ENCODE measurements at regions of chr9 and their contacts with region 1.

Region 1: DNA sequence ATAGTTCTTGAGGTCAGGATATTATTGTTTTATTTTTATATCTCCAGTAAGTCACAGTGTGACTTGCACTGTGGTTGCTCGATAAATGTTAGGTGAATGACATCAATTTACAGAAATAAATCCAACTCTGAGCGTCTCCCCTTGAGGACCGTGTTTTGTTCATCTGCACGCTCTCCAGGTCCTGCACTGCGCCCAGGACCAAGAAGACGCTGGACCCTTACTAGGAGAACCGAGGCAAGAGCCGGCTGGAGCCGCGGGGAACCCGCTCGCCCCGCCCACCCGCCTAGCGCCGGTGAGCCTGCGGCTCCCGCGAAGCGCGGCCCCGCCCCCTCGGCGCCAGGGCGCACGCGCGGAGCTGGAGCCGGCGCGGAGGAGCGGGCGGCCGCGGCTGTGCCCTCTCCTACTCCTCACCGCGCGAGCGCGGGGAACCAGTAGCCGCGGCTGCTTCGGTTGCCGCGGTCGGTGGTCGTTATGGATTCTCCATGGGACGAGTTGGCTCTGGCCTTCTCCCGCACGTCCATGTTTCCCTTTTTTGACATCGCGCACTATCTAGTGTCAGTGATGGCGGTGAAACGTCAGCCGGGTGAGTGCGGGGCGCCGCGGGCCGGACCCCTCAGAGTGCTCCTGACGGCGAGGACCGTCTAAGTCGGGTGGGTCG is at the start of gene TMEM38B:
- DNase-seq: peak; percentile 88
- ATAC-seq: peak; percentile 85
- H3K4me3 Mint-ChIP-seq: peak within 1 kb of the TSS; percentile 76
- H3K27ac Mint-ChIP-seq: peak within 1 kb of the TSS; percentile 86
- H3K4me1 Mint-ChIP-seq: peaks cover 27% of the 10 kb centered on the region
- H3K27me3 Mint-ChIP-seq: peaks cover 15% of the 10 kb centered on the region
- total RNA-seq, gene TMEM38B: 14.5 to 24.8 TPM

Region 2: DNA sequence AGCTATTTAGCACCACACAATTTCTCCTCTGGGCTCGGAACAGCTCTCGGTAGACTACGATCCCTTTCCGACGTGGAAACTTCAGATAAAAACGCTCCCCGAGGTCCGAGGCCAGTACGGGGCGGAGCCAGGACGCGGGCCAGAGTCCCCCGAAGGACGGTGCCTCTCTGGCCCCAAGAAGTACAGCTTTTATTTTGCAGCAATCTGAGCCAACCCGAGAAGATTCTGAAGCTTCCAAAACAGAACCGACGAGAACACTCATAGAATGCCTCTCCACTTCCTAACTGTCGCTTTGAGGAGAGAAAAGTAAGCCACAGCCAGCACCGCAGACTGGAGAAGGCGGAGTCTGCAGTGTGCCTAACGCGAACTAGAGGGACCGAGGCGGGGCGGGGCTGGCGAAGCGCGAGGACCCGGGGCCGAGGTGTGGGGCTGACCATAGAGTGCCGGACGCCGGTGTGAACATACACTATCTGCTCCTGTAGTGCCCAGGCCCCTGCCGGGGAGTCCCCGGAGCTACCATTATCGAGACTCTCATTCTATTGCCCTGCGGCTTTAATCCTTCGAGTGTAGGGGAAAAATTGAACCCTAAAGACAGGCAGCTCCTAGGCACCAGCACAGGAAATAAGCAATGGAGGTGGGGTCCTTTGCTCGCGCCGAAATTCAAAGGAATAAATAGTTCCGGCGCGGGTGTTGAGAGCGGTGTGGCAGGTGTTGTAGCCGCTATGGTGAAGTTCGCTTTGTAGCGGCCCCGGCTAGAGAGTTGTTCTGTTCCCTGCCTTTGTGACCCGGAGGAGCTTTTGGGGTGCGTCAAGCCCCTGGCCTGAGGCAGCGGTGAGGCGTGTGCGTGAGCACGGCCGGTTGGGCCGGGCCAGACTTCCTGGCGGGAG is 1600.4 kb before region 1 on chr9 and contains the start of gene SMC2:
- CTCF ChIA-PET with region 1: no interaction called
- POLR2A ChIA-PET with region 1: no interaction called
- intact Hi-C with region 1: loop called in 1 of 2 experiments (anchors 2 kb)
- DNase-seq: peak; percentile 96
- ATAC-seq: peak; percentile 91
- H3K4me3 Mint-ChIP-seq: peak within 1 kb of the TSS; percentile 88
- H3K27ac Mint-ChIP-seq: peak within 1 kb of the TSS; percentile 99
- H3K4me1 Mint-ChIP-seq: peaks cover 37% of the 10 kb centered on the region
- H3K27me3 Mint-ChIP-seq: no peaks in the 10 kb centered on the region
- total RNA-seq, gene SMC2: 78.4 to 84.5 TPM

Region 3: DNA sequence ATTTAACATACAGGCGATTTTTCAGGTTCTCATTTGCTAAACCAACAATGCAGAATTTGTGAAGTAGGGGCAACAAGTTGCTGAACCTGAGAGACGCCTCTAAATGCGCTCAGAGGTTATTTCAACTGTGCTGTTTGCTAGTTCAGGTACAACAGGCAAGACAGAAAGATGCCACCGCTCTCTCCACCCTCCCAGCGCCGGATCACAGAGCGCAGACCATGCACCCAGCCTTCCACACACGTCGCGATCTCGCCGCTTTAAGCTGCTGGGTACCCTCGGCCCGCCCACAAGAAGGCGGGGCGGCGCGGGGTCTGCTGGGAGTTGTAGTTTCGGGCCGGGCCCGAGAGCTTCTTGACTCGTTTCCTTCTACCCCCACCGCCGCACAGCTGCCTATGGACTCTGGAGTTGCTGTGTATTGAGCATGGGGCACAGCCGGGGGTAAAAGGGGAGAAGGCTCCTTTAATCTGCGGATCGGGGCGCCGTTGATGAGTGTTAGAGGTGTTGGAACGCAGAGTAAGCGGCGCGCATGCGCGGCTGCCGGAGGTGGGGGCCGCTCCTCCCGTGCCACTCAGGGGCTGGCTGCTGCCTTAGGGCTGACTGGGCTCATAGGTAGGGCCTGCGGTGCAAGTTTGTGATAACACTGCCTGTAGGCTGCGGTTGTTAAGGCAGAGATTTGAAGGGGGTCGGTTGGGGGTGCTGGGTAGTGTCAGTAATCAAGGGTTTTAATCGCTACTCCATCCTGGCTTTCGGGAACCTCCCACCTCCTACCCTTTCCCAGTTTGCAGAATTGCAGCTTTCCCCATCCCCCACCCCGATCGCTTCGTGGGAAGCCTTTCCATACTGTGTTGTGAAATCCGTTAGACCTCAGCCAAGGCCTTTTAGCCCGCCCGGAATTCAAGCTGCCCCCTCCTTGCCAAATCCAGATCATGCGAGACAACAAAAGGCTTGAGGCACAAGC is 726.0 kb before region 1 on chr9:
- CTCF ChIA-PET with region 1: no interaction called
- POLR2A ChIA-PET with region 1: no interaction called
- intact Hi-C with region 1: loop called in 1 of 2 experiments (anchors 10 kb)
- DNase-seq: peak; percentile 94
- ATAC-seq: peak; percentile 99
- H3K4me3 Mint-ChIP-seq: peak overlapping the region; percentile 86
- H3K27ac Mint-ChIP-seq: peak overlapping the region; percentile 92
- H3K4me1 Mint-ChIP-seq: peaks cover 13% of the 10 kb centered on the region
- H3K27me3 Mint-ChIP-seq: peaks cover 9% of the 10 kb centered on the region

Region 4: DNA sequence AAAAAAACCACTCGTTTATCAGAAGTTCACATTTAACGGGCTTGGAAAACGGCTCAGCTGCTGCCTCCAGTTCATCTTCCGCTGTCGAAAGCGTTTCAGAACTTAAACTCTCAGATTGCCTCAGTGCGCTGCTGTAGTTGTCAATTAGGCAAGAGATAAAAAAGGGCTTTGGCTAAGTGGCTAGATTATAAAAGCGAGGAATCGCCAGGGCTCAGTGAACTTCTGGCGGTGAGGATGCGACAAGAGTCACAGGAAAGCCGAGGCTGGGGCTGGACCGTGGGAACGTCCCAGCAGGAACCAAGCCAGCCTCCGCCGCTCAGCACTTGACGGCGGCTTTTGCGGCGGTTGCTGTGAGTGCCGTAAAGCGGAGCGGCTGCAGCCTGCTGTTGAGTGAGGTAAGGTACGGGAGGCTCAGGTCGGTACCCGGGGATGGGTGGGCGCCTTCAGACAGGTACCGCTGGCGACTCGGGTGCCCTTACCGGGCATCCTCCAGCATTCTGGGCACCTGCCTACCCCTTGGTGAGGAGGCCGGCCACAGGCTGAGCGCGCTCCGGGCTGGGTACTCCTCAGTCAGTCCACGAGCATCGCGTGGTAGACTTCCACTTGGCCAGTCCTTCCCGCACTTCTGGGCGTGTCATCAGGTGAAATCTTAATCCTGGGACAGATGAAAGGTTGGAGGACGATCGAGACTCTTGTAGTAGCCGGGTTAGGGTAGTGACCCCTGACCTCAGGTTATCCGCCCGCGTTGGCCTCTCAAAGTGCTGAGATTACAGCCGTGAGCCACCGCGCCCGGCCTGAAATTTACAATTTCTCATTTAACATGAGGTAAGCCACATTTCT is 136.3 kb before region 1 on chr9 and contains the start of gene FKTN:
- CTCF ChIA-PET with region 1: no interaction called
- POLR2A ChIA-PET with region 1: no interaction called
- intact Hi-C with region 1: loop called in 1 of 2 experiments (anchors 1 kb)
- DNase-seq: peak; percentile 91
- ATAC-seq: peak; percentile 97
- H3K4me3 Mint-ChIP-seq: peak within 1 kb of the TSS; percentile 94
- H3K27ac Mint-ChIP-seq: peak within 1 kb of the TSS; percentile 85
- H3K4me1 Mint-ChIP-seq: peaks cover 18% of the 10 kb centered on the region
- H3K27me3 Mint-ChIP-seq: no peaks in the 10 kb centered on the region
- total RNA-seq, gene FKTN: 12.1 to 16.0 TPM

Region 5: GRCh38 chr9:105712773-105713172 is 18.5 kb after region 1 on chr9:
- CTCF ChIA-PET with region 1: interaction called, 11 read pairs
- POLR2A ChIA-PET with region 1: no interaction called
- intact Hi-C with region 1: no loop called
- DNase-seq: no peak
- ATAC-seq: no peak
- H3K4me3 Mint-ChIP-seq: no peak overlapping the region
- H3K27ac Mint-ChIP-seq: no peak overlapping the region
- H3K4me1 Mint-ChIP-seq: peaks cover 8% of the 10 kb centered on the region
- H3K27me3 Mint-ChIP-seq: no peaks in the 10 kb centered on the region

Region 6: GRCh38 chr9:106075960-106076327 is 381.6 kb after region 1 on chr9:
- CTCF ChIA-PET with region 1: no interaction called
- POLR2A ChIA-PET with region 1: no interaction called
- intact Hi-C with region 1: no loop called
- DNase-seq: no peak
- ATAC-seq: no peak
- H3K4me3 Mint-ChIP-seq: no peak overlapping the region
- H3K27ac Mint-ChIP-seq: no peak overlapping the region
- H3K4me1 Mint-ChIP-seq: no peaks in the 10 kb centered on the region
- H3K27me3 Mint-ChIP-seq: no peaks in the 10 kb centered on the region